Caco-2 (cell line): ENCODE measurements at regions of chr12 and their contacts with region 1.

Region 1: GRCh38 chr12:85468356-85469157 is 188.5 kb downstream of the ALX1 start:
- DNase-seq: peak; percentile 48 to 55
- H3K4me3 ChIP-seq: peak overlapping the region; percentile 11
- H3K4me3 Mint-ChIP-seq: peak overlapping the region; percentile 76
- H3K27ac Mint-ChIP-seq: peak overlapping the region; percentile 36
- H3K4me1 ChIP-seq: peaks cover 14% of the 10 kb centered on the region
- H3K4me1 Mint-ChIP-seq: peaks cover 19% of the 10 kb centered on the region
- H3K27me3 ChIP-seq: no peaks in the 10 kb centered on the region
- H3K27me3 Mint-ChIP-seq: no peaks in the 10 kb centered on the region
- CTCF ChIP-seq: peak; percentile 73 to 80

Region 2: DNA sequence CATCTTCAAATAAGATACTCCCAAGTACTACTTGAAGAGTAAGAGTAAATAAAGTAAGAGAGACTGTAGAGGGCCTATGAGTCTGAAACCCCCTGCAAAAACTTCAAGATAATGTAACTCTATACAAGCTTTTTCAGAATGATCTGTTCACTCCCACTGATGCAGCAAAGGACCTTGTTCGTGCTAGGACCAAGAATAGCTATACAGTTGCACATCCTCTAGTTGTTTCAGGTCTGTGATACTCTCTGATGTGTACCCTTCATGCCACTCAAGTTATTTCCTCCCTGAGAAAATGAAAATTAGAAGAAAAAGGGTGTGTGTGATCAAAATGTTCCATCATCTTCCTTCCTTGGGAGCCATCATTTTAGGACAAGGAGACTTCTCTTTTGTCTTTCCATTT is 15.8 kb after region 1 on chr12:
- CTCF ChIA-PET with region 1: no interaction called
- POLR2A ChIA-PET with region 1: no interaction called
- intact Hi-C with region 1: no loop called
- DNase-seq: no peak
- H3K4me3 ChIP-seq: no peak overlapping the region
- H3K4me3 Mint-ChIP-seq: no peak overlapping the region
- H3K27ac Mint-ChIP-seq: no peak overlapping the region
- H3K4me1 ChIP-seq: no peaks in the 10 kb centered on the region
- H3K4me1 Mint-ChIP-seq: no peaks in the 10 kb centered on the region
- H3K27me3 ChIP-seq: no peaks in the 10 kb centered on the region
- H3K27me3 Mint-ChIP-seq: no peaks in the 10 kb centered on the region
- CTCF ChIP-seq: no peak

Region 3: DNA sequence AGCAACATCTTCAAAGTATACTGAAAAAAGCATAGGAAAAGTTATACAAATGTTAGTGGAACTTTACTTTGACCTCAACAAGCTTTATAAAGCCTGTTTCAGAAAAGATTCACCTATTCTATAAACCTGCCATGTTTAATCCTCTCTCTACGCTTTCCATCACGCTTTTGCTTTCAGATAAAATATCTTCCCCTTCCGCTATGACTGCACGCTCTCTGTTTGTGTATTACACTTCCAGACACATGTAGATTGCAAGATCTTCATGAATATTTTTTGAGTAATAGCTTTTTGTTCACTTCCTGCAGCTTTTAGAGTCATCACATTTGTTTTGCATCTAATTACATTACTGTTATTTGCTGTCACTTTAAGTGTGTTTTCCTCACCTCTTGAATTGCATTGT is 96.2 kb after region 1 on chr12:
- CTCF ChIA-PET with region 1: no interaction called
- POLR2A ChIA-PET with region 1: no interaction called
- intact Hi-C with region 1: no loop called
- DNase-seq: no peak
- H3K4me3 ChIP-seq: no peak overlapping the region
- H3K4me3 Mint-ChIP-seq: no peak overlapping the region
- H3K27ac Mint-ChIP-seq: no peak overlapping the region
- H3K4me1 ChIP-seq: no peaks in the 10 kb centered on the region
- H3K4me1 Mint-ChIP-seq: no peaks in the 10 kb centered on the region
- H3K27me3 ChIP-seq: no peaks in the 10 kb centered on the region
- H3K27me3 Mint-ChIP-seq: no peaks in the 10 kb centered on the region
- CTCF ChIP-seq: no peak

Region 4: GRCh38 chr12:85575120-85576096 is 106.9 kb after region 1 on chr12:
- CTCF ChIA-PET with region 1: no interaction called
- POLR2A ChIA-PET with region 1: no interaction called
- intact Hi-C with region 1: loop called (anchors 1 kb)
- DNase-seq: peak; percentile 53 to 58
- H3K4me3 ChIP-seq: no peak overlapping the region
- H3K4me3 Mint-ChIP-seq: no peak overlapping the region
- H3K27ac Mint-ChIP-seq: no peak overlapping the region
- H3K4me1 ChIP-seq: no peaks in the 10 kb centered on the region
- H3K4me1 Mint-ChIP-seq: no peaks in the 10 kb centered on the region
- H3K27me3 ChIP-seq: no peaks in the 10 kb centered on the region
- H3K27me3 Mint-ChIP-seq: no peaks in the 10 kb centered on the region
- CTCF ChIP-seq: peak; percentile 58 to 80

Region 5: DNA sequence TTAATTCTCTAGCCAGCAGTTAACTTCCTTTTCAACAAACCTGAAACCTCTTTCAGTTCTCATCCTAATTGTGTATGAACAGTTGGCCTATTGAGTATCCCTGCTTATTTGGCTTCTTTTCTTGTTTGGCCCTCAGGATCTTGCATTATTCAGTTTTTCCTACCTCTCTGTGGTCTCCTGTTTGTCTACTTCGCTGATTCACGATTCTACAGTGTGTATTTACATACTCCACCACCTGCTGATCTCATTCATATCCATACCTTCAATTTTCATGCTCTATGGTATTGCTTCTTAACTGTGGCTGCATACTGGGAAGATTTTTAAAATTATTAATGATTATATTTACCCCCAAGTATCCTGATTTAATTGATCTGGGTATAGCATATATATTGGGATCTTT is 311.2 kb after region 1 on chr12:
- CTCF ChIA-PET with region 1: no interaction called
- POLR2A ChIA-PET with region 1: no interaction called
- intact Hi-C with region 1: loop called (anchors 5 kb)
- DNase-seq: no peak
- H3K4me3 ChIP-seq: no peak overlapping the region
- H3K4me3 Mint-ChIP-seq: no peak overlapping the region
- H3K27ac Mint-ChIP-seq: no peak overlapping the region
- H3K4me1 ChIP-seq: peaks cover 16% of the 10 kb centered on the region; the same call in 1 of the 2 replicates
- H3K4me1 Mint-ChIP-seq: no peaks in the 10 kb centered on the region
- H3K27me3 ChIP-seq: no peaks in the 10 kb centered on the region
- H3K27me3 Mint-ChIP-seq: peaks cover 2% of the 10 kb centered on the region
- CTCF ChIP-seq: no peak

Region 6: DNA sequence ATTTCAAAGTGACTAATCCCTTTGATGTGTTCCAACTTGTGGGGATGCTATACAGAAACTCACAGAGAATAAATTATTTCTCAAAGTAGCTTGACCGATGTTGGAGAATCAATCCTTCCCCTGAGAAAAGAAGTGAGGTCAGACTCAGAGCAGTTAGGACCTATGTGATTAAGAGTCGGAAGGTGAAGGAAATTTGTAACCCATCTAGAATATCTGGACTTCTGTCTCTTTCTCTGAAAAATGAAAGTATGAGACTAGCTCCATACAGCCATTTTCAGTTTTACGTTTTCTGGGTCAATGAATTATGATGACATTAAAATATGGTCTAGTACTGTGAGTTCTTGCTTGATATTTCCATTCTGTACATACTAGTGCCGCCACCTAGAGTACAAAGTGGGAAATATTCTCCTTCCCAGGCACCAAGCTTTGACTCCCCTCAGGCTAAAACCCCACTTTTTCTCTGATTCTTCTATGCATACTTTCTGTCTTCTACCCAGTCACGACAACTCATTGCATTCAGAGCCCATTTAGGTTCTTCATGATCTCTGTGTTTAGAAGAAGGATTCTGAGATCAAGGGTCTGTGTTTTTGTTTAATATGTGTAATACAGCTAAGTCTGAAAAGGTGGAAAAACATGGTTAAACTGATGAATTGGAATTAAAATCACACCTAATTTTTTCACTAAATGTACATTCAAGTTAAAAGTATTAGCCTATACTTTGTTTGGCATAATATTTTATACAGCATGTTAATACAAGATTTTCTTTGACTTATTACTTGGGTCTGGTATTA is 398.6 kb after region 1 on chr12:
- CTCF ChIA-PET with region 1: interaction called, 4 read pairs
- POLR2A ChIA-PET with region 1: no interaction called
- intact Hi-C with region 1: loop called (anchors 1 kb)
- DNase-seq: peak in 1 of 2 experiments; percentile 58
- H3K4me3 ChIP-seq: no peak overlapping the region
- H3K4me3 Mint-ChIP-seq: no peak overlapping the region
- H3K27ac Mint-ChIP-seq: no peak overlapping the region
- H3K4me1 ChIP-seq: no peaks in the 10 kb centered on the region
- H3K4me1 Mint-ChIP-seq: no peaks in the 10 kb centered on the region
- H3K27me3 ChIP-seq: no peaks in the 10 kb centered on the region
- H3K27me3 Mint-ChIP-seq: peaks cover 10% of the 10 kb centered on the region
- CTCF ChIP-seq: peak; percentile 71 to 75

Region 7: GRCh38 chr12:85920324-85920947 is 451.9 kb after region 1 on chr12:
- CTCF ChIA-PET with region 1: no interaction called
- POLR2A ChIA-PET with region 1: no interaction called
- intact Hi-C with region 1: loop called (anchors 1 kb)
- DNase-seq: no peak
- H3K4me3 ChIP-seq: no peak overlapping the region
- H3K4me3 Mint-ChIP-seq: no peak overlapping the region
- H3K27ac Mint-ChIP-seq: no peak overlapping the region
- H3K4me1 ChIP-seq: no peaks in the 10 kb centered on the region
- H3K4me1 Mint-ChIP-seq: no peaks in the 10 kb centered on the region
- H3K27me3 ChIP-seq: no peaks in the 10 kb centered on the region
- H3K27me3 Mint-ChIP-seq: no peaks in the 10 kb centered on the region
- CTCF ChIP-seq: peak; percentile 36 to 61